Dorsolateral prefrontal cortex (tissue), 120 donors: ENCODE measurements at regions of chr10 and their contacts with region 1.

Region 1: DNA sequence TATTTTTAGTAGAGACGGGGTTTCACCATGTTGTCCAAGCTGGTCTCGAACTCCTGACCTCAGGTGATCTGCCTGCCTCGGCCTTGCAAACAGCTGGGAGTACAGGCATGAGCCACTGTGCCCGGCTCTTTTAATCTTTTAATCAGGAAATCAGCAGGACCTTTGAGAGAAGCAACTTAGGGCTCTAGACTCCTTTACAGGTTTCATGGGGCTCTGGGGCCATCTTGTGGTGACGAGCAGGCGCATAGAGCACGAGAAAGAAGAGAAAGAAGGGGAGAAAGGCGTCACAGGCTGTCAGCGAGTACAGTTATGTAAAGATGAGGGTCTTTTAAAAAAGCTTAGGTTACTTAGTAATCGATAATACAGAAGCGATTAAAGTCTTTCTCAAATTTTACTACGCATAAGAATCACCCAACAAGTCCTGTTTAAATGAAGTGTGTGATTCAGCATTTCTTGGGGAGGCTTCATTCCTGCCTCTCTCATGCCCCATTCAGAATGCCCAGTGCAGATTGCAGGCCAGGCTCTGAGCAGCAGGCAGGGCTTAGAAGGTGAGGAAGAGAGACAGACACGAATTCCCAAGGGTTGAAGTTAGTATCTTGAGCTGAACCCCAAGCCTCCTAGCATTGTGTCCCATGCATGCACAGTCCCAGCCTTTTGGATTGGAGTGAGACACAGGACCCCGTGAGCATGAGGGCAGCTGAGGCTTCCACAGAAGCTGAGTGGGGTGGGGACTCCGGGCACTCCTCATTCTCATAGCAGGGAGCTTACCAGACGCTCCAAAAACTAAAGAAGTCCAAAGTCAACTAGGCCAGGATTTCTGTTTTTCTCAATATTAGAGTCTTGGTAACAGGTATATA is 23.6 kb upstream of the PFKP start:
- DNase-seq: peak in 8 of 10 donors; percentile 61 to 78 (median 70)
- H3K4me3 ChIP-seq: no peak overlapping the region
- H3K27ac ChIP-seq: peak overlapping the region in 19 of 59 donors; percentile 2 to 57 (median 32)
- H3K27me3 ChIP-seq: peaks cover 0 to 7% (median 0%) of the 10 kb centered on the region in 45 donors
- CTCF ChIP-seq: peak; percentile 24 to 82 (median 64)

Region 2: DNA sequence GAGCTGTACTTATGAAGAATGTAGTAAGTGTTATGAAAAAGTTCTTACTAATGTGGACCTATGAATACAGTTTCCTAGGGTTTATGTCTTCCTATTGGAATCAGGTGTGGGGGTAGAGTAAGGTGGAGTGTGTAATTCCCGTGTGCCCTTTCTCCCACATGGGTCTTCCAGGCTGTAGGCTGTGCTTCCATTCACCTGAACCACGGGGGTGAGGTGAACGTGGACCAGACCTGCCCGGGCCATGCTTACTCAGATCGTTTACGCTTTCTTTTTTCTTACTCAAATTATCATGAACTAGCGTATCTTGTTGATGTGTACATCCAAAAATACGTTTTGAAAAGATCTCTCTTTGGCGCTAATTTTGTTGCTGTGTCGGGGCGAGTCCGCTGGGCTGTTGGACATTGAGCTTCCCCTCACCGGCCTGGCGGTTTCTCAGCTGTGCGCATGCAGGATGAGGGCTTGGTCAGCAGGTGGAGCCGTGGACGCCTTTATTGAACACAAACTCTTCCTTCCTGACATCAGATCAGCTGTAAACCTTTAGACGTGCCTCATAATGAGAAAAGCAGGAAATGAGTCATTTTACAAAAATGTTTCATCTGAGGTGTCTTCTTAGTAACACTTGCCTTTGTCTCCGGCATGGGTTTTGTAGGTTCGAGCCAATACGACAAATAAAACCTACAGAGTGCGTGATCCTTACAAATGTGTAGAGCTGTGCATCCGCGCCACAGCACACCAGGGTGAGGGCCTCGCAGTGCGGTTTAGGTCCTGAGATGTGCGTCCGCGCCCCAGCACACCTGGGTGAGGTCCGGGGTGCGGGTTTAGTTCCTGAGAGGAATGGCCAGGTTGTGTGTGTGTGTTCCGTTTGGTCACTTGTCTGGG is 1933.7 kb before region 1 on chr10:
- intact Hi-C with region 1: loop called in 1 of 2 experiments (anchors 10 kb)
- DNase-seq: peak in 8 of 10 donors; percentile 40 to 79 (median 74)
- H3K4me3 ChIP-seq: no peak overlapping the region
- H3K27ac ChIP-seq: peak overlapping the region in 19 of 59 donors; percentile 13 to 67 (median 47)
- H3K27me3 ChIP-seq: no peaks in the 10 kb centered on the region
- CTCF ChIP-seq: peak; percentile 25 to 79 (median 68)

Region 3: GRCh38 chr10:2927958-2928840 is 115.5 kb before region 1 on chr10:
- intact Hi-C with region 1: loop called in 1 of 2 experiments (anchors 5 kb)
- DNase-seq: peak in 9 of 10 donors; percentile 44 to 82 (median 71)
- H3K4me3 ChIP-seq: no peak overlapping the region
- H3K27ac ChIP-seq: no peak overlapping the region
- H3K27me3 ChIP-seq: peaks cover 0 to 28% (median 0%) of the 10 kb centered on the region in 45 donors
- CTCF ChIP-seq: peak; percentile 21 to 81 (median 70)

Region 4: GRCh38 chr10:3258394-3258793 is 214.7 kb after region 1 on chr10:
- intact Hi-C with region 1: no loop called
- DNase-seq: no peak
- H3K4me3 ChIP-seq: no peak overlapping the region
- H3K27ac ChIP-seq: no peak overlapping the region
- H3K27me3 ChIP-seq: peaks cover 0 to 2% (median 0%) of the 10 kb centered on the region in 45 donors
- CTCF ChIP-seq: no peak